ENCODE measurements at regions of chr6 and their contacts with region 1.

Region 1: GRCh38 chr6:90393232-90393884 is 96.7 kb upstream of the BACH2 start:
- DNase-seq: peak in 1 of 2 donors; percentile 78
- H3K4me3 ChIP-seq: no peak overlapping the region
- H3K27ac ChIP-seq: no peak overlapping the region
- H3K4me1 ChIP-seq: no peaks in the 10 kb centered on the region
- H3K27me3 ChIP-seq: no peaks in the 10 kb centered on the region
- CTCF ChIP-seq: peak; percentile 67 to 85 (median 76)

Region 2: GRCh38 chr6:89940225-89941027 is 452.9 kb before region 1 on chr6:
- intact Hi-C with region 1: loop called (anchors 2 kb)
- DNase-seq: peak in 1 of 2 donors; percentile 78
- H3K4me3 ChIP-seq: no peak overlapping the region
- H3K27ac ChIP-seq: no peak overlapping the region
- H3K4me1 ChIP-seq: peaks cover 0 to 15% of the 10 kb centered on the region in 2 donors
- H3K27me3 ChIP-seq: no peaks in the 10 kb centered on the region
- CTCF ChIP-seq: peak; percentile 54 to 67 (median 59)

Region 3: DNA sequence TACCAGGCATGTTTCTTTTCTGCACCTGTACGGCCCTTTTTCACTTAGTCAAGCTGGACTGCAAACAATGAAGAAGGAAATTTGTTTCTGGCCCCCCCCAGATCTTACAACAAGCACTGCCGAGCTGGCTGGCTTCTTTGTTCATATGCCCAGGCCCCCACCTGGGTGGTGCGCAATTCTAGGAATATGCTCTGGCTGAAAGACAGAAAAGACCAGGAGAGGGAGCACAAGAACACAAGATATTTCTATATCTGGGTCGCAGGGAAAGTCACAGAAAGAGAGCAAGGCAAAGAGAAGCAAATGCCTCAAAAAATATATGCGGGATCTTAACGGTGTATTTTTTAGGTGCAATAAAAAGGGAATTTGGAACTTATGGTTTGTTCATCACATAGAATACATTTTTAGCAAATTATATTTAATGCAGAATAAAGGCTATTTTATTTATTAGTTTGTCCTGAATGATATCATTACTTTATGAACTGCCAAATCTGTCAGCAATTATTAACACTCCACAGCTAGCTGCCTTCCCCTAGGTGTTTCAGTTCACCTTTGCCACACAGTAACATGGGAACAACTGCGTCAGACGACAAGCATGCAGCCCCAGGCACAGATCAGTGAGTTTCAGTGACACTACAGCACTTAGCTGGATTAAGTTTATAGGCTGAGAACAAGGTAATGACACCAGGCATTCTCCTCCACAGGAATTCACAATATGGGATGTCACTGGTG is 422.6 kb before region 1 on chr6:
- intact Hi-C with region 1: loop called (anchors 2 kb)
- DNase-seq: peak in 1 of 2 donors; percentile 64
- H3K4me3 ChIP-seq: no peak overlapping the region
- H3K27ac ChIP-seq: no peak overlapping the region
- H3K4me1 ChIP-seq: no peaks in the 10 kb centered on the region
- H3K27me3 ChIP-seq: no peaks in the 10 kb centered on the region
- CTCF ChIP-seq: peak; percentile 50 to 73 (median 53)

Region 4: DNA sequence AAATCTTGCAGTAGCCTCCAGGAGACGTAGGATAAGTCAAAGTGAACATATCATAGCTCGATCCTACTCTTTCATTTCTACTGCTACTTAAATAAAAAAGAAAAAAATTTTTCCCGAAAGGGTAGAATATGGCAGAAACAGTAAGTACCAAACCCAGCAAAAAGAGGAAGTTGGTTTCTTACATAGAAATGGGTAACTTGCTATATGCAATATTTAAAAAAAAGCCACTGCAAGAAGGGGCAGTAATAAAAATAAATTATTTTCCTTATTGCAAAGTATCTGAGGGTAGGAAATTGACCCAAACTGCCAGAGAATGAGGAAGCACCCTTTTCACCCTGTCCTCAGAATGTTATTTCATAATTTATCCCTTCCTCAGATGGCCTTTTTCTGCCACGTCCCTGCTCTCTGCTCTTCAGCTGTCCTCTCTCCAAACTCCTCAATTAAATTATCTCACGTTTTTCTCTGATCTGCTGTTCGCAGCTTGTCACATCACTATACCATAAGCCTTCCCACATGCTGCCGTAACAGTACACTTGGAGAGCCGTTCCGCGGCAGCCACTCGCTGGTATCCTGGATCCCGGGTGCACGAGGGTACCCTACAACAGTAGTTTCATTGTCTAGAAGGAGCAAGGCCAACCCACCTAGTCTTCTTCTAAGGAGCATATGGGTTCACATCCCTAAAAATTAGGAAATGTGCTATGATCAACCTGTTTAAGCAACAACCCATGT is 246.3 kb before region 1 on chr6:
- intact Hi-C with region 1: no loop called
- DNase-seq: no peak
- H3K4me3 ChIP-seq: no peak overlapping the region
- H3K27ac ChIP-seq: no peak overlapping the region
- H3K4me1 ChIP-seq: no peaks in the 10 kb centered on the region
- H3K27me3 ChIP-seq: no peaks in the 10 kb centered on the region
- CTCF ChIP-seq: no peak